Panc1 (cell line): ENCODE measurements at regions of chr12 and their contacts with region 1.

Region 1: DNA sequence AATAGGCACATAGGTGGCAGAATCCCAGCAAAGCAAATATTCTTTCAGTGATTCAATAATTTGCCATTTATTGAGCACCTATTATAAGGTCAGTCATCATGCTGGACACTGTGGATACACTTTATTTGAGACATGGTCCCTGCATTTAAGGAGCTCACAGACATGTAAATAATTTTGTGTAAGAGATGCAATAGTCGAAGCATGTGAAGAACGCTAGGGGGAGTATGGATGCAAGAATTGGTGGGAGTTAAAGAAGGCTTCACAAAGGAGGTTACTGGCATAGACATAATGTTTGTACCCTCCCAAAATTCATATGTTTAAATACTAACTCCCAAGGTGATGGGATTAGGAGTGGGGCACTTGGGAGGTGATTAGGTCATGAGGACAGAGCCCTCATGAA is 260.6 kb upstream of the GARIN6 start:
- DNase-seq: no peak
- ATAC-seq: no peak
- H3K4me3 ChIP-seq: no peak overlapping the region
- H3K27ac ChIP-seq: no peak overlapping the region
- H3K4me1 ChIP-seq: no peaks in the 10 kb centered on the region
- H3K27me3 ChIP-seq: no peaks in the 10 kb centered on the region
- CTCF ChIP-seq: peak; percentile 47

Region 2: GRCh38 chr12:99043319-99043914 is 343.5 kb before region 1 on chr12:
- CTCF ChIA-PET with region 1: interaction called, 5 read pairs
- POLR2A ChIA-PET with region 1: no interaction called
- in situ Hi-C with region 1: no loop called
- intact Hi-C with region 1: loop called (anchors 10 kb)
- DNase-seq: peak; percentile 43
- ATAC-seq: no peak
- H3K4me3 ChIP-seq: no peak overlapping the region
- H3K27ac ChIP-seq: no peak overlapping the region
- H3K4me1 ChIP-seq: no peaks in the 10 kb centered on the region
- H3K27me3 ChIP-seq: no peaks in the 10 kb centered on the region
- CTCF ChIP-seq: peak; percentile 87

Region 3: DNA sequence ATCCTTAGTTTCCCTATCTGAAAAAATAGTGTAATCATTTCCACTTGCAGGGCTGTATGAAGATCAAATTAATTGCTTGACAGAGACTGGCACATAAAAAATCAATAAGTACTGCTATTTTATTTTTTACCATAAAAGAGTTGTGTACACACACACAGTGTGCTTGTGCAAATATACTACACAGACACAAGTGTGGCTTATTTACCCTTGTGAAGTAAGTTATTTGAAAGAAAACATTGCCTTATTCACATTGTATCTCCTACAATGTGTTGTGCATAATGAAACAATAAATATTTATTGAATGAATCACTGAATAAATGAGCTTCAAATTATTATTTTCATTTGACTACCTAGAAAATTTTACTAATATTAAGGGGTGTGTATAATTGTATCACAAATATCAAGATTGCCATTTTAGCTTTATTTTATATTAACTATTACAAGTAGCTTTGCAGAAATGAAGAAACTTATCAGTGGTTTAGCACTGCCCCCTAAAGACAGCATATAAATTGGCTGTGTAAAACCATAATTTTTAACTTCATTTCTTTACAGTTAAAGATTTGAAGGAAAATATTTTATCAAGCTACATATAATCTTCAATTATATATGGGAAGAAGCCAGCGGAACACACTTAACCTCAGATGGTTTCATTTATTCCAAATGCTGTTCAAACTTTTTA is 271.9 kb after region 1 on chr12:
- CTCF ChIA-PET with region 1: interaction called, 4 read pairs
- POLR2A ChIA-PET with region 1: interaction called, 9 read pairs
- in situ Hi-C with region 1: no loop called
- intact Hi-C with region 1: loop called (anchors 2 kb)
- DNase-seq: no peak
- ATAC-seq: no peak
- H3K4me3 ChIP-seq: no peak overlapping the region
- H3K27ac ChIP-seq: no peak overlapping the region
- H3K4me1 ChIP-seq: no peaks in the 10 kb centered on the region
- H3K27me3 ChIP-seq: no peaks in the 10 kb centered on the region
- CTCF ChIP-seq: peak; percentile 24; the same call in 1 of the 2 replicates